Panc1 (cell line): ENCODE measurements at regions of chr17 and their contacts with region 1.

Region 1: GRCh38 chr17:3514873-3515272 is 39.1 kb downstream of the ASPA start:
- DNase-seq: no peak
- ATAC-seq: no peak
- H3K4me3 ChIP-seq: no peak overlapping the region
- H3K27ac ChIP-seq: no peak overlapping the region
- H3K4me1 ChIP-seq: no peaks in the 10 kb centered on the region
- H3K27me3 ChIP-seq: no peaks in the 10 kb centered on the region
- CTCF ChIP-seq: no peak

Region 2: GRCh38 chr17:3535253-3535995 is 20.6 kb after region 1 on chr17:
- CTCF ChIA-PET with region 1: interaction called, 11 read pairs
- POLR2A ChIA-PET with region 1: no interaction called
- in situ Hi-C with region 1: no loop called
- intact Hi-C with region 1: no loop called
- DNase-seq: peak; percentile 12
- ATAC-seq: peak; percentile 83
- H3K4me3 ChIP-seq: peak overlapping the region; percentile 28 to 45
- H3K27ac ChIP-seq: peak overlapping the region; percentile 1; the same call in 1 of the 2 replicates
- H3K4me1 ChIP-seq: no peaks in the 10 kb centered on the region; the same call in 1 of the 2 replicates
- H3K27me3 ChIP-seq: no peaks in the 10 kb centered on the region
- CTCF ChIP-seq: peak; percentile 90

Region 3: DNA sequence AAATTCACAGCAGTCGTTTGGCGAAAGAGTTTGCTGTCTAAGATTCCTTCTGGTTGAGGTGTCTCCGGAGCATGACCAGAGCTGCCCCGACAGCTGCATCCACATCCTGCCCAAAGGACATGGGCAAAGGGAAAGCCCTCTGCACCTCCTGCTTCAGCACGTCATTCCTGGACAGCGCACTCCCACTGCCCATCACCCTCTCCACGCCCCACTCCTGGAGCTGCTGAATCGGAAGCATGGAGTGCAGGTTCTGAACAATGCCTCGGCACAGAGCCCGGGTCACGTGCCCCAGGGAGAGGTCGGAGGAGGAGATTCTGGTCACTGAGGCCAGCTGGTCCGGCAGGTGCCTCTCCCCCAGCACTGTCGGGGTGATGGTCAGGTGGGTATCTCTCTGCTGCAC is 95.7 kb after region 1 on chr17:
- CTCF ChIA-PET with region 1: no interaction called
- POLR2A ChIA-PET with region 1: no interaction called
- in situ Hi-C with region 1: no loop called
- intact Hi-C with region 1: no loop called
- DNase-seq: no peak
- ATAC-seq: no peak
- H3K4me3 ChIP-seq: no peak overlapping the region
- H3K27ac ChIP-seq: no peak overlapping the region
- H3K4me1 ChIP-seq: no peaks in the 10 kb centered on the region
- H3K27me3 ChIP-seq: no peaks in the 10 kb centered on the region
- CTCF ChIP-seq: no peak